ENCODE measurements at regions of chr7 and their contacts with region 1.

Region 1: DNA sequence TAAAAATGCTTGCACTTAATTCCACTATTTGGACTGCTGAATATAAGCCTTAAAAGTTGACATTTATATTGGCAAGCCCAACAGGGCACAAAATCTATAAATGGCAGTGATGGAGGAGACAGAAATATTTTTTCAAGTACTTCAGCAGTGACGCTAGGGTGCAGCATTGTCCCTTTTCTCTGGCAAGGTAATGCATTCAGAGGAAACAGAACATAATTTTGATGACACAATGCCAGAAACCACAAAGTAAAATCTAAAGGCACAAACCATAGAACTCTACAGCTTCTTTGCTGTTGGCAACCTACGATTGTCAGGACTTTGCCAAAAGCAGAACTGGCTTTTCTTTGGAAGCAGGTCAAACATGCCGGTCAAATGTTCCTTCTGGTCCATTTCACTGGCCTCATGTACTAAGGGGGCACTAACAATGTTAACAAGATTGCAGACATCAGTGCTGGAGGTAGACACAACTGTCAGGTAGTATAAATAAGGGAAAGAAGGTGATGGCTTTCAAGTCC is 30.9 kb upstream of the FAM133B start:
- DNase-seq: peak in 40 of 42 donors; percentile 21 to 90 (median 76)

Region 2: DNA sequence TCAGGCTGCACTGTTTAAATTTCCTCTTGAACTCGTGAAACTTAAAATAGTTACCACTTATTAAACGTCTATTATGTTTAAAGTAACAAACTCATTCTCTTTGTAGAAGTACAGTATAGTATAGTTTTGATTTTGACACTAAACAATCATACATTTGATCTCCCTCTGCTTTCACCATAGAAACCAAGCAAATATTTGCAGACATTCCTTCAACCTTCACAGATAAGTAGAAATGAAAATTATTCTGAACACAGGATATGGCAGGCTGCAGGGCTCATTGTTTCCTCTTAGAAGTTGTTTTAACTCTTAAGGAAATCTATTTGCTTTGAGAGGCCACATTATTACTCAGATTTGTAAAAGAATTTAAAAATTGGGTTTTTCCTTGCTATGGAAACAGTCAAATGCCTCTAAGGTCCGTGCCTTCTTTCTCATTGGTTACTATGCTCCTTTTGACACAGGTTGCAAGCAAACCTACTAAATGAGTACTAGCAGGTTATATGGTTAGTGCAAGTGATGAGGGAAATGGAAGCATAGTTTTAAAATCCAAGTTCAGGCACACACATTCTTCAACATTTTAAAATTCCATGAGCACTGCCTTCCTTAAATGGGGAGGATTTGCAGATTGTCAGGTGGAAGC is 61.9 kb after region 1 on chr7:
- intact Hi-C with region 1: loop called (anchors 10 kb)
- DNase-seq: no peak

Region 3: DNA sequence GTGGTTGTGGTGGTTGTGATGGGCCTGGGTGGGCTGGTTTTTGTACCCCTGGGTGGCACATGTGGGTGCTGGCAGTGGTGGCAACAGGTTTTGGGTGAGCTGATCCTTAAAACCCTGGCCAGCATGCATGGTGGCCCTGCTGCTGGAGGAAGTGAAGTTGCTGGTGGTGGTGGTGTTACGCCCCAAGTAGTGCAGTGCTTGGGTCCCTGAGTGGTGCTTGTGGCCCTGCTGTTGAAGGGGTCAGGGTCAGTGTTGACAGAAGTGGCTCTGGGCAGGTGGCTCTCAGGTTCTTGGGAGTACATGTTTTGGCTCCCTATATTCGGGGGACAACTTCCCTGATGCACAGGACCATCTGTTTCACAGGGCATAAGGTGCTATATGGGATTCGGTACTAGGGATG is 465.7 kb after region 1 on chr7:
- intact Hi-C with region 1: no loop called
- DNase-seq: no peak

Measured in head of caudate nucleus (tissue), 42 donors.